AG04450 (cell line): ENCODE measurements at regions of chr5 and their contacts with region 1.

Region 1: DNA sequence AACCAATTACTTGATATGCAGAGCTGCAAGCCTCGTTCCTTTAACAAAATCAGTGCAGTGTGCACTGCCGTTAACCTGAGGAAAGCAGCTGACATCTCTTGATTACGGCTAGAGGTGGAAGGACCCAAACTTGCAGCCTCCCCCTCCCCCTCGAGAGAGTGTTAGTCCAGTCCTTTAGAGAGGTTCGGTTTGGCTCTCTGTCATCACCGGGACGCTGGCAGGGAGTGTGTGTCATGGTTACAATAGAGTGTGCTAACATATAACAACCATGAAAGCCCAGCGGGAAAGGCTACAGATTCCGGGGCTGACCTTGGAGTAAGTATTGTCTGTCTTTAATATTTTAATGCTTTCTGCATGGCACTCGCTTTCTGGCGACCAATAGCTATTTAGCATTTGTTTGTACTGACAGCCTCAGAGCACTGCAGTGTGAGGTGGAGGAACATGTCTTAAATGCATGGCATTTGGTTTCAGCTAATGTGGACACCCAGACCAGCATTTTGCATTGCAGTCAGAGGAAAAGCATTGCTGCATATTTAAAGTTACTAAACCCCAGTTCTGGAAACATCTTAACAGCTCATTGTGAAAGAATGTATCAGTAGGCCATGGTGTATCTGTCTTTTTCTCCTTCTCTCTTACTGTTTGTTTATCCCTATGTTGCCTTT is 237.5 kb downstream of the CD180 start:
- DNase-seq: peak; percentile 43
- H3K4me3 ChIP-seq: peak overlapping the region; percentile 70
- H3K27ac ChIP-seq: peak overlapping the region; percentile 85
- H3K27me3 ChIP-seq: no peaks in the 10 kb centered on the region
- CTCF ChIP-seq: no peak

Region 2: GRCh38 chr5:66979738-66980137 is 20.6 kb after region 1 on chr5:
- CTCF ChIA-PET with region 1: no interaction called
- POLR2A ChIA-PET with region 1: no interaction called
- DNase-seq: no peak
- H3K4me3 ChIP-seq: no peak overlapping the region
- H3K27ac ChIP-seq: no peak overlapping the region
- H3K27me3 ChIP-seq: no peaks in the 10 kb centered on the region
- CTCF ChIP-seq: no peak

Region 3: GRCh38 chr5:67045776-67046740 is 86.9 kb after region 1 on chr5:
- CTCF ChIA-PET with region 1: no interaction called
- POLR2A ChIA-PET with region 1: interaction called, 12 read pairs
- DNase-seq: no peak
- H3K4me3 ChIP-seq: no peak overlapping the region
- H3K27ac ChIP-seq: no peak overlapping the region
- H3K27me3 ChIP-seq: no peaks in the 10 kb centered on the region
- CTCF ChIP-seq: no peak

Region 4: GRCh38 chr5:67065237-67065636 is 106.1 kb after region 1 on chr5:
- CTCF ChIA-PET with region 1: no interaction called
- POLR2A ChIA-PET with region 1: no interaction called
- DNase-seq: no peak
- H3K4me3 ChIP-seq: no peak overlapping the region
- H3K27ac ChIP-seq: no peak overlapping the region
- H3K27me3 ChIP-seq: no peaks in the 10 kb centered on the region
- CTCF ChIP-seq: no peak

Region 5: GRCh38 chr5:67142816-67143215 is 183.7 kb after region 1 on chr5:
- CTCF ChIA-PET with region 1: no interaction called
- POLR2A ChIA-PET with region 1: no interaction called
- DNase-seq: no peak
- H3K4me3 ChIP-seq: no peak overlapping the region
- H3K27ac ChIP-seq: no peak overlapping the region
- H3K27me3 ChIP-seq: no peaks in the 10 kb centered on the region
- CTCF ChIP-seq: no peak